Endothelial cell of umbilical vein (primary cell): ENCODE measurements at regions of chr1 and their contacts with region 1.

Region 1: GRCh38 chr1:209190591-209191261 is 392.8 kb upstream of the CAMK1G start:
- DNase-seq: peak; percentile 70
- H3K4me3 ChIP-seq: no peak overlapping the region
- H3K27ac ChIP-seq: no peak overlapping the region
- H3K4me1 ChIP-seq: no peaks in the 10 kb centered on the region
- H3K27me3 ChIP-seq: no peaks in the 10 kb centered on the region
- CTCF ChIP-seq: peak; percentile 87 to 90
- POLR2A ChIP-seq: no peak

Region 2: GRCh38 chr1:208465778-208466590 is 724.7 kb before region 1 on chr1:
- CTCF ChIA-PET with region 1: no interaction called
- POLR2A ChIA-PET with region 1: no interaction called
- dilution Hi-C with region 1: no loop called
- intact Hi-C with region 1: loop called (anchors 5 kb)
- DNase-seq: no peak
- H3K4me3 ChIP-seq: no peak overlapping the region
- H3K27ac ChIP-seq: no peak overlapping the region
- H3K4me1 ChIP-seq: no peaks in the 10 kb centered on the region
- H3K27me3 ChIP-seq: peaks cover 4 to 7% of the 10 kb centered on the region in 2 experiments
- CTCF ChIP-seq: no peak
- POLR2A ChIP-seq: no peak

Region 3: DNA sequence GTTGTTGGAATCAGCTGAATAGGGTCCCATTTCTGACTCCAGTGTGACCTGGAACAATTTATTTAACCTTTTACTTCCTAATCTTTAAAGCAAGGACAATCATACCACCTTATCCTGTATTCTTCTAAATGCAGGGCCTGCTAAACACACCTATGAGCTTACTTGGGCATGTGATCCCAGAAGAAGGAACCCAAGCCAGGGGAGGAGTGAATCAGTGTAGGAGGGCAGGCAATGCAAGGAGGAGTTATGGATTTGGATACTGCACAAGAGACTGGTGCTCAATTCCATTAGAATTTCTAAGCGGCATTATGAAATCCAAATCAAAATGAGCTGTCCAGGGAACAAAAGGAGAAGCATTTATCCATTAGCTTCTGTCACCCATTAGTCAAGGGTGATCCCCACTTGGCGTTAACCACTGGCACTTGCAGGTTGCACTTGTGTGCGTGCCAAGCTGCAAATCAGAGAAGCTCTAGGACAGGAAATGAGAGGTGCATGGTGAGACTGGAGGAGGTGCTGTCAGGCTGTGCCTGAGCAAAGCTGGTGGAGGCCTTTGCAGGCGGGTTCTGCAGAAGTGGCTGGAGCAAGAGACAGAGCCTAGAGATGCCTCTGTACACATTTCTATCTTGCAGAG is 649.4 kb before region 1 on chr1:
- CTCF ChIA-PET with region 1: no interaction called
- POLR2A ChIA-PET with region 1: no interaction called
- dilution Hi-C with region 1: no loop called
- intact Hi-C with region 1: loop called (anchors 10 kb)
- DNase-seq: no peak
- H3K4me3 ChIP-seq: no peak overlapping the region
- H3K27ac ChIP-seq: no peak overlapping the region
- H3K4me1 ChIP-seq: no peaks in the 10 kb centered on the region
- H3K27me3 ChIP-seq: no peaks in the 10 kb centered on the region
- CTCF ChIP-seq: no peak
- POLR2A ChIP-seq: no peak

Region 4: DNA sequence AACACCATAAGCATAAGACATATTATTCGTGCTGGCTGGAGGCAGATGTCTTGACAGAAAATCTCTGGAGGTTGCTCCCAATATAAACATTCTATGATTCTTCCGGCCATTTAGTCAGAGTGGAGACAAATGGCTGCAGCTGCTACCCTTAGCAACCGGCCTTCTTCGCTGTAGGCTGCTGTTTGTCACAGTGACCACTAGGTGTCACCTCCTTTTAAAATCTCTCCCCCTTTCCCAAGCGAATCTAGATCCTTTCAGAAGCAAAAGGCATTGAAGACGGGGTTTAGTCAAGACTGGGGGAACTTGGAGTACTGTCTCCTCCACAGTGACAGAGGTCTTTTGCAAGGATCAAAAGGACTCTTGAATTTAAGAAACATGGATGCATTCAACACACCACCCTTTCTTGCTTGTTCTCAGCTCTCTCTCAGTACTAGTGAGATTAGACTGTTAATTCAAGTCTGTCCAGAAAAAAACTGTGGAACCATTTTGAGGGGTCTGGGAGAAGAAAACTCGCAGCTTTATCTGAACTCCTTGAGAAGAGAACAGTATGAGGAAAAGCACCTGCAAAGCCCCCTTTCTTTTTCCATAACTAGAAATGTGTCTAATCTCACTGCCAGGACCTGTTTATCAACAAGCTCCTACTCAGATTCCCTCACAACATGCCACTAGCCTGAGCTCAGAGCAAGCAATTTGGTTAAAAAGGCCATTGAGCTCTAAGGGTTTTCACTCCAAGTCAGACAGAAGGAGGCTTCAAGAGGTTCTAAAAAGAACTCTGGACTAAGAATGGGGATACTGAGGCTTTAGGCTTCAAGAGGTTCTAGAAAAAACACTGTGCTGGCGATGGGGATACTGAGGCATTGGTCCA is 538.2 kb before region 1 on chr1:
- CTCF ChIA-PET with region 1: interaction called, 58 read pairs
- POLR2A ChIA-PET with region 1: no interaction called
- dilution Hi-C with region 1: no loop called
- intact Hi-C with region 1: loop called (anchors 1 kb)
- DNase-seq: peak; percentile 88
- H3K4me3 ChIP-seq: no peak overlapping the region
- H3K27ac ChIP-seq: no peak overlapping the region
- H3K4me1 ChIP-seq: no peaks in the 10 kb centered on the region
- H3K27me3 ChIP-seq: peaks cover 3 to 6% of the 10 kb centered on the region in 2 experiments
- CTCF ChIP-seq: peak; percentile 78 to 83
- POLR2A ChIP-seq: no peak

Region 5: GRCh38 chr1:209008586-209008985 is 182.1 kb before region 1 on chr1:
- CTCF ChIA-PET with region 1: no interaction called
- POLR2A ChIA-PET with region 1: no interaction called
- dilution Hi-C with region 1: no loop called
- intact Hi-C with region 1: loop called (anchors 5 kb)
- DNase-seq: no peak
- H3K4me3 ChIP-seq: no peak overlapping the region
- H3K27ac ChIP-seq: no peak overlapping the region
- H3K4me1 ChIP-seq: no peaks in the 10 kb centered on the region
- H3K27me3 ChIP-seq: peaks cover 1 to 3% of the 10 kb centered on the region in 2 experiments
- CTCF ChIP-seq: no peak
- POLR2A ChIP-seq: no peak

Region 6: DNA sequence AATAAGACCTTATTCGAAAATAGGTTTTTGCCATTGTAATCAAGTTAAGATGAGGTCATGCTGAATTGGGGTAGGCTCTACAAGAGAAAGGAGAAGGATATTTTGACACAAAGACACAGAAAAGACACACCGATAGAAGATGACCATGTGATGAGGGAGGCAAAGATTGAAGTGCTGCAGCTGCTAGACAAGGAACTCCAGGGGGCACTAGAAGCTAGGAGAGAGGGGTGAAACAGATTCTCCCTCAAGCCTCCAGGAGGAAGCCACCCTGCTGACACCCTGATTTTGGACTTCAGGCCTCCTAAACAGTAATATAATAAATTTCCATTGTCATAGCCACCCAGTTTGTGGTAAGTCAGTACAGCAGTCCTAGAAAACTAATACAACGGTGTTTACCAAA is 114.0 kb before region 1 on chr1:
- CTCF ChIA-PET with region 1: interaction called, 3 read pairs
- POLR2A ChIA-PET with region 1: no interaction called
- dilution Hi-C with region 1: no loop called
- intact Hi-C with region 1: loop called (anchors 2 kb)
- DNase-seq: peak; percentile 10
- H3K4me3 ChIP-seq: no peak overlapping the region
- H3K27ac ChIP-seq: no peak overlapping the region
- H3K4me1 ChIP-seq: no peaks in the 10 kb centered on the region
- H3K27me3 ChIP-seq: no peaks in the 10 kb centered on the region
- CTCF ChIP-seq: peak in 1 of 2 donors; percentile 34
- POLR2A ChIP-seq: no peak

Region 7: GRCh38 chr1:209132736-209133467 is 57.8 kb before region 1 on chr1:
- CTCF ChIA-PET with region 1: no interaction called
- POLR2A ChIA-PET with region 1: no interaction called
- dilution Hi-C with region 1: no loop called
- intact Hi-C with region 1: no loop called
- DNase-seq: no peak
- H3K4me3 ChIP-seq: no peak overlapping the region
- H3K27ac ChIP-seq: no peak overlapping the region
- H3K4me1 ChIP-seq: no peaks in the 10 kb centered on the region
- H3K27me3 ChIP-seq: no peaks in the 10 kb centered on the region
- CTCF ChIP-seq: no peak
- POLR2A ChIP-seq: no peak

Region 8: DNA sequence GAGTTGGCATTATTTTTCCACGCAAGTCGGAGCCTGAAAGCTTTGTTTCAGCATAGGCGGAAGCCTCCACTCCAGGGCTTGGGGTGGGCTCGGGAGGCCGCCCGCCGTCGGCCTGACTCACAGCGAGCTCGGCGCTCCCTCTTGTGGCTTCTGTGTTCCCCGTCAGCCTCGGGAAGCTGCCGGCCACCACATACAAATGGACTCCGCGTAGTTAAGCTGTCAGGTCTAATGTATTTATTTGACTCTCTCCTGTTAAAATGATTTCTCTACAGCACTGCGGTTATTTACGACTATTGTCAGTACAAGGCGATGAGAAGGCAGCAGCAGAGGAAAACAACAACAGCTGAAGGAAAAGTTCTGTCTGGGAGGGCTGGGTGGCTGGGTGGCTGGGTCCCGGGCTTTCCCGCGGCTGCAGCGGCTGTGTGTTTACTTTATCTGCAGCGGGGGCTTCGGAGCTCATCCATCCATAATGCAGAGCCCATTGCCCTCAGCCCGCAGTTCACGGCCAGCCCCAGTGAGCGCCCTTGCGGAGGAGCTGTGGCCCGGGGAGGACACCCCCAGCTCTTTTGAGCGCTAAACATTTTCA is 17.1 kb after region 1 on chr1:
- CTCF ChIA-PET with region 1: interaction called, 17 read pairs
- POLR2A ChIA-PET with region 1: no interaction called
- dilution Hi-C with region 1: no loop called
- intact Hi-C with region 1: no loop called
- DNase-seq: peak; percentile 73
- H3K4me3 ChIP-seq: no peak overlapping the region
- H3K27ac ChIP-seq: no peak overlapping the region
- H3K4me1 ChIP-seq: no peaks in the 10 kb centered on the region
- H3K27me3 ChIP-seq: peaks cover 16 to 23% of the 10 kb centered on the region in 2 experiments
- CTCF ChIP-seq: peak; percentile 77 to 87
- POLR2A ChIP-seq: no peak